GM13976 (cell line): ENCODE measurements at regions of chr6 and their contacts with region 1.

Region 1: DNA sequence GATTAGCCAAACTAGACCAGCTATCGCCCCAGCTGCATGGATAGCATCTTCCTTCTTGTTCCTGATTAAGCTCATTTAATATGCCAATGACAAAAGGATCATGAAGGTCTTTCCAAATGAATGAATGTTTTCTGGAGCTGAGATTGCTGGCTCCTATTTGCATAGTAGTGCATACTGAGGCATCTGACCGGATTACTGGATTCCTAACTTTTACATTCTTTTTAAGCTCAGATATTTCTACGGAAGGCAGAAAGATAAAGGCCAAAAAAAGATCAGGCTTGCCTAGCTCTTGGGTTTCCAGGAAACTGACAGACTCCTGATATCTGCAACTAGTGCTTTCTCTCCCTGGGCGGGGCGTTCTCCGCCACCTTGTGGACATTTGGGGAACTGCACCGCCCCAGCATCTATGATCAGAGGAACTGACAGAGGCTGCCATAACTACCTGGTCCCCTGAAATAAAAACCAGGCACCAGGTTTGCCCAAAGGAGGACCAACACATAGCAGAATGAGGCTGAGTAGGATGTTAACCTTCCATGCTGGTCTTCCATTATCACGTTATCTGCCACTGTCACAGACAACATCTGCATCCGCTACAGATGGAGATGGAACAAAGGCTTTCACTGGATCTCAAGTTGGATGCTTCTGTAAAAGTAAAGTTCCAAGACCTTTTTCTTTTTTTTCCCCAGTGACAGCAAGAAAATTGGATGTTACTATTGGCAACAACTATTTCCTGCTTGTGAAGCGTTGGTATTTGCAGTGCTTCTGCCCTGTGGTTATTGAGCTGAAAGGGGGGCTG is 33.2 kb downstream of the NT5E start:
- DNase-seq: peak; percentile 55
- CTCF ChIP-seq: peak; percentile 98

Region 2: GRCh38 chr6:84835340-84835739 is 647.8 kb before region 1 on chr6:
- in situ Hi-C with region 1: no loop called
- DNase-seq: no peak
- CTCF ChIP-seq: no peak

Region 3: GRCh38 chr6:85354761-85355618 is 128.1 kb before region 1 on chr6:
- in situ Hi-C with region 1: loop called (anchors 5 kb)
- DNase-seq: peak; percentile 46
- CTCF ChIP-seq: peak; percentile 90